Upper lobe of right lung (tissue), 1 donor: ENCODE measurements at regions of chr1 and their contacts with region 1.

Region 1: DNA sequence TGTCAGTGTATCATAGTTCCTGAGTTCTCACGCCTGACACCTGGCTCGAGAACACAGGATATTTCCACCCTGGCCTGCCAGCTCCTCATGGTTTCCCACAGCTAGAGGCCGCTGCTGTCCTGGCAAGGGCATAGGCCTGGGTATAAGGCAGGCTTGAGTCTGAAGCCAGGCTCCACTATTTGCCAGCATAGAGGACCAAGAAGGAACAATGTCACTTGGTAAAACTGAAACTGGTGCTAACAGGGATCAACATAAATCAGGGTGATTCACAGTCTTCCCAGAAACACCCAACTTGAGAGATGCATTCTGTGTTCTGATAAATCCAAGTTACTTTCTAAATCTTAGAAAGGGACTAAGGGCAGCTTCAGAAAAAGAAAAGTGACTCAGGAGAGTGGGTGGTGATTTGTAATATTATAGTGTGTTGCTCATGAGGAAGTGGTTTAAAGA is 6.9 kb upstream of the S100A2 start:
- DNase-seq: peak; percentile 90
- ATAC-seq: peak; percentile 90
- H3K4me3 ChIP-seq: no peak overlapping the region
- H3K27ac ChIP-seq: peak overlapping the region; percentile 52
- H3K4me1 ChIP-seq: peaks cover 25% of the 10 kb centered on the region
- H3K27me3 ChIP-seq: no peaks in the 10 kb centered on the region
- CTCF ChIP-seq: peak; percentile 88

Region 2: DNA sequence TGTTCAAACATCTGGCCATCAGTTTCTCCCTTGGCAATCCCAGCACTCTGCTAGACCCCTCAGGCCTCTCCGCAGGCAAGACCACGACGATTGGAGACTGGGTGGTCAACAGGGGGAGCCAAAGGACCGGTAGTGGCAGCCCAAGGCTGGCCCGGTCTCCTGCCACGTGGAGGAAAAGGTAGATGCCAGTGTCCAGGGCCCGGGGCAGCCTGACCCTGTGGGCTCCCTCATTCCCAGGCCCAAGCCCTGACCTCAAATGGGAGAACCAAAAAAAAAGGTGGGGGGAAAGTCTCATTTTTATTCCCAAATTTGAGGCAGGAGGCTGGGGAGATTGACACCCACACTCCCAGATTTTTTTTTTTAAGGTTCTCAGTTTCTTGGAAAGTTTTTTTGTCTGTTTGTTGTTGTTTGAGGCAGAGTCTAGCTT is 61.6 kb before region 1 on chr1:
- intact Hi-C with region 1: loop called (anchors 5 kb)
- DNase-seq: peak; percentile 89
- ATAC-seq: peak; percentile 88
- H3K4me3 ChIP-seq: no peak overlapping the region
- H3K27ac ChIP-seq: no peak overlapping the region
- H3K4me1 ChIP-seq: peaks cover 11% of the 10 kb centered on the region
- H3K27me3 ChIP-seq: no peaks in the 10 kb centered on the region
- CTCF ChIP-seq: peak; percentile 92

Region 3: DNA sequence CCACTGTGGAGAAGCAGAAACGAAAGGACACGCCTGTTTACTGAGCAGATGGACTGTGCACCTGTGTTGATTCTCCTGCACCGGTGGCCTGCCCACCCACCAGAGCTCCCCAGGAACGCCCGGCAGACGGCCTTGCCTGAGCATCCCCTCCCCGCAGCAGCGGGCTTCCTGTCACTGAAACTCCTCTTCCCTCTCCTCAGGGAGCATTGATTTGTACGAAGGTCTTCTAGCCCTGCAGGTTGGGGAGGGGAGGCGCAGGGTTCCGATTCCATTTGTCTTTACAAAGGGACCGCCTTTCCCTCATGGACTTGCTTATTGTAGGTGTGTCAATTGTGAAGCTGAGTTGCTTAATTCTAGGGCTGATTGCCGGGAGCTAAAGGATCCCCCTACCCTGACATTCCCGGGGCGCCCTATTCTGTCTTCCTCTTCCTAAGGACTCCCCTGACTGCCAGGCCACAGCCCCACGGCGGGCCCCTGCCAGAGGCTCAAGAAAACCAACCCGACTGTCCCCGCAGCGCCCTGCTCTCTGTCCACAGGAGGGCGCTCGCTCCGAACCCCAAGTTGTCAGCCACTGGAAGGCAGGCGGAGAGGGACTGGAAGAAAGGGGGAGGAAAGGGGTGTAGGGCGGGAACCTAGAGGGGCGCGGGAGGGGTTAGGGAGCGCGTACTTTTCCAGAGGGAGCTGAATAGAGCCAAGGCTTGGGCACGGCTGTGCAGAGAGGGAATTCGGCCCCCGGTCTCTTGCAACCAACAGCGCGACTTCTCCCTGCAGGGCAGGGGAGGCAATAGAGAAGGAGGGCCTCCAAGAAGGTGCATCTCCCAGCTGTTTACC is 39.6 kb before region 1 on chr1:
- intact Hi-C with region 1: loop called (anchors 5 kb)
- DNase-seq: peak; percentile 93
- ATAC-seq: peak; percentile 75
- H3K4me3 ChIP-seq: peak overlapping the region; percentile 87
- H3K27ac ChIP-seq: peak overlapping the region; percentile 99
- H3K4me1 ChIP-seq: peaks cover 40% of the 10 kb centered on the region
- H3K27me3 ChIP-seq: no peaks in the 10 kb centered on the region
- CTCF ChIP-seq: peak; percentile 87

Region 4: GRCh38 chr1:153626922-153627796 is 54.6 kb after region 1 on chr1 and contains the start of gene S100A13:
- intact Hi-C with region 1: loop called (anchors 10 kb)
- DNase-seq: peak; percentile 89
- ATAC-seq: peak; percentile 79
- H3K4me3 ChIP-seq: peak within 1 kb of the TSS; percentile 62
- H3K27ac ChIP-seq: peak within 1 kb of the TSS; percentile 93
- H3K4me1 ChIP-seq: peaks cover 33% of the 10 kb centered on the region
- H3K27me3 ChIP-seq: no peaks in the 10 kb centered on the region
- CTCF ChIP-seq: peak; percentile 66
- total RNA-seq, gene S100A13: 76.1 TPM

Region 5: DNA sequence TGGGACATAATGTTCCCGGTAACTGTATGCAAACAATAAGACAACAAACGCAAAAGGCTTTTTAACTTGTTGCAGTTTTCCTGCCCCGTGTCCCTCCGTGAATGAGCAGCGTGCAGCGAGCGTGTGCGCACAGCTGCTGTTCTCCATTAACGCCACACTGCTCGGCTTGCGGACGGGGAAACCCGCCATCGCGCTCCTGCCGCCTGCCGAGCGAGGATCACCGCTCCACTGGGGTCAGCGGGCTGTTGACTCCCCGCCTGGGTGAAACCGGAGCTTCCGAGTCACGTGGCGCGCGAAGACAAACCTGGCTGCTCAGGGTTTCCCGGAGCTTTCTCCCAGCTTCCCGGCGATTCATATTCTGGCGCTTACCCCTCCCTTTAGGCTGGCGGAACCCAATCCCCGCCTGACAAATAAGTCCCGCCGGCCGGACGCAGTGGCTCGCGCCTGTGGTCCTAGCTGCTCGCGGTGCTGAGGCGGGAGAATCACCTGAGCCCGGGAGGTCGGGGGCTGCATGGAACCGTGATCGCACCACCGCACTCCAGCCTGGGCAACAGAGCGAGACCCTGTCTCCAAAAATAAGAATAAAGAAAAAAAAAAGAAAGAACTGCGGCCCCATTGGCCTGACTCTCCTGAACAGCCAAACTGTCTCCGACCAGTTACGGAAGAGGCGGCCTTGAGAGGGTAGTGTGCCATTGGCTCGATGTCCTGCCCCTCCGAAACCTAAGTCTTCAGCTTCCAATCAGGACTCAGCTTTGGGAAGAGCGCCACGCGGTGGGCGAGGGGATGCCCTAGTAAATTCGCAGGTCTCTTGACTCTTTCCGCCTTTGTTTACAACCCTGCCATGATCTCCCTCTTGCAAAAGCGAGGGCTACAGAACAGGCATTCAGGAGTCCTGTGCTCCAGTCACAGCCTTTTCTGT is 394.7 kb after region 1 on chr1 and contains the start of gene CREB3L4:
- intact Hi-C with region 1: no loop called
- DNase-seq: peak; percentile 94
- ATAC-seq: peak; percentile 85
- H3K4me3 ChIP-seq: peak within 1 kb of the TSS; percentile 75
- H3K27ac ChIP-seq: peak within 1 kb of the TSS; percentile 94
- H3K4me1 ChIP-seq: peaks cover 26% of the 10 kb centered on the region
- H3K27me3 ChIP-seq: no peaks in the 10 kb centered on the region
- CTCF ChIP-seq: peak; percentile 55
- total RNA-seq, gene CREB3L4: 10.5 TPM